ENCODE measurements at regions of chr10 and their contacts with region 1.

Region 1: DNA sequence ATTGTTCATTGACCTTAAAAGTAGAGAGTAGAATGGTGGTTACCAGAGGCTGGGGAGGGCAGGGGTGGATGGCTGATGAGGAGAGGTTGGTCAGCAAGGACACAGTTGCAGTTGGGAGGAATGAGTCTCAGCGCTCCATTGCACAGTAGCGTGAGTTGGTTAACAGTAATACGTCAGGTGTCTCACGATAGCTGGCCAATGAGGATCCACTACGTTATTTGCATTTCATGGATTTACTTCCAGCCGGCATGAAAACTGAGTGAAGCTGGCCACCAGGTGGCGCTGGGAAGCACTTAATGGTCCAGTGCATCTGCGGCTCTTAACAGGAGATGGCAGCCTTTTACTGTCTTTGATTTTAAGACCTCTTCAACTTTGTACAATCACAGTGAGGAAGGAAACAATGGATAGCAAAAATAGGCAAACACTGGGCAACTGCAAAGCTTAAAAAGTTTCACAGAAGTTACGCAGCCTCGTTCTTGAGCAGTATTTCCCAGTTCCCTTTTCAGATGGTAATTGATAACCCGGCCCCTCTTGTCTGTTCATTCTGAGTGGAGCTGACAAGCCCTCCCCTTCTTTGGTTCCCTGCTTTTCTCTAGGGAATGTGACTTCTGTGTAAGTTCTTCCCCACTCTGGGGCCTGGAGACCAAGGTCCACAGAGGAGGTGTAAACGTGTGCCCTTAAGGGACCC is 23.7 kb downstream of the AKR1E2 start:
- DNase-seq: peak; percentile 82 to 92
- ATAC-seq: peak; percentile 88 to 95 (median 95)
- H3K4me3 ChIP-seq: no peak overlapping the region
- H3K4me3 Mint-ChIP-seq: no peak overlapping the region
- H3K27ac ChIP-seq: no peak overlapping the region
- H3K27ac Mint-ChIP-seq: no peak overlapping the region
- H3K4me1 ChIP-seq: peaks cover 4% of the 10 kb centered on the region
- H3K4me1 Mint-ChIP-seq: peaks cover 0 to 13% of the 10 kb centered on the region in 2 donors
- H3K27me3 ChIP-seq: no peaks in the 10 kb centered on the region
- H3K27me3 Mint-ChIP-seq: no peaks in the 10 kb centered on the region
- CTCF ChIP-seq: peak; percentile 100

Region 2: GRCh38 chr10:5094265-5095205 is 244.8 kb after region 1 on chr10 and contains the start of gene AKR1C3:
- intact Hi-C with region 1: loop called (anchors 5 kb)
- DNase-seq: peak in 1 of 2 donors; percentile 59
- ATAC-seq: peak; percentile 73 to 84 (median 81)
- H3K4me3 ChIP-seq: peak within 1 kb of the TSS; percentile 63
- H3K4me3 Mint-ChIP-seq: peak within 1 kb of the TSS; percentile 98
- H3K27ac ChIP-seq: peak within 1 kb of the TSS; percentile 47
- H3K27ac Mint-ChIP-seq: peak within 1 kb of the TSS; percentile 89 to 94
- H3K4me1 ChIP-seq: no peaks in the 10 kb centered on the region
- H3K4me1 Mint-ChIP-seq: peaks cover 45 to 52% of the 10 kb centered on the region in 2 donors
- H3K27me3 ChIP-seq: no peaks in the 10 kb centered on the region
- H3K27me3 Mint-ChIP-seq: peaks cover 1 to 3% of the 10 kb centered on the region in 2 donors
- CTCF ChIP-seq: peak; percentile 69
- total RNA-seq, gene AKR1C3: 77.5 to 140 (median 137) TPM

Region 3: GRCh38 chr10:5283305-5284158 is 433.8 kb after region 1 on chr10:
- intact Hi-C with region 1: loop called (anchors 1 kb)
- DNase-seq: peak; percentile 57 to 78
- ATAC-seq: peak; percentile 84 to 93 (median 84)
- H3K4me3 ChIP-seq: no peak overlapping the region
- H3K4me3 Mint-ChIP-seq: peak overlapping the region; percentile 86
- H3K27ac ChIP-seq: peak overlapping the region; percentile 52
- H3K27ac Mint-ChIP-seq: peak overlapping the region; percentile 85 to 92
- H3K4me1 ChIP-seq: peaks cover 16% of the 10 kb centered on the region
- H3K4me1 Mint-ChIP-seq: peaks cover 42 to 45% of the 10 kb centered on the region in 2 donors
- H3K27me3 ChIP-seq: no peaks in the 10 kb centered on the region
- H3K27me3 Mint-ChIP-seq: no peaks in the 10 kb centered on the region
- CTCF ChIP-seq: peak; percentile 76

Region 4: DNA sequence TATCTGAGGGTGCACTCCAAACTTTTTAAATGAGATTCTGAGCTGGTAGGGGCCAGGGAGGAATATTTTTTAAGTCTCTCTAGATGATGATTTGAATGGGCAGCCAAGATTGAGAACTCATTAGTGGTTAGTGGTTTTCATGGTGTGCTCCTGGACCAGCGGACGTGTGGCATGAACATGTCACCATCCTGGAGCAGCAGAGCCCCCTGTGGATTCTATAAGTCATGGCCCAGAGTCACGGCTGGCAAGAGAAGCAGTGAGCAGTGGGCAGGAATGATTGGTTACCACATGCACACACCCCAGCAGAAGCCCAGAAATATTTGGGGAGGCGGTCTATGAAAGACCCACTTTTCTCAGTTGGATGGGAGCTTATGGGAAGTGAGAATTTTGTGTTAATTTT is 493.9 kb after region 1 on chr10:
- intact Hi-C with region 1: loop called (anchors 1 kb)
- DNase-seq: peak in 1 of 2 donors; percentile 44
- ATAC-seq: peak; percentile 71 to 89 (median 81)
- H3K4me3 ChIP-seq: no peak overlapping the region
- H3K4me3 Mint-ChIP-seq: no peak overlapping the region
- H3K27ac ChIP-seq: no peak overlapping the region
- H3K27ac Mint-ChIP-seq: peak overlapping the region in 1 of 2 donors; percentile 29
- H3K4me1 ChIP-seq: peaks cover 4% of the 10 kb centered on the region
- H3K4me1 Mint-ChIP-seq: peaks cover 25 to 27% of the 10 kb centered on the region in 2 donors
- H3K27me3 ChIP-seq: no peaks in the 10 kb centered on the region
- H3K27me3 Mint-ChIP-seq: no peaks in the 10 kb centered on the region
- CTCF ChIP-seq: peak; percentile 44

Region 5: GRCh38 chr10:5385224-5385623 is 535.5 kb after region 1 on chr10:
- intact Hi-C with region 1: loop called (anchors 1 kb)
- DNase-seq: no peak
- ATAC-seq: no peak
- H3K4me3 ChIP-seq: no peak overlapping the region
- H3K4me3 Mint-ChIP-seq: no peak overlapping the region
- H3K27ac ChIP-seq: no peak overlapping the region
- H3K27ac Mint-ChIP-seq: no peak overlapping the region
- H3K4me1 ChIP-seq: no peaks in the 10 kb centered on the region
- H3K4me1 Mint-ChIP-seq: no peaks in the 10 kb centered on the region
- H3K27me3 ChIP-seq: no peaks in the 10 kb centered on the region
- H3K27me3 Mint-ChIP-seq: no peaks in the 10 kb centered on the region
- CTCF ChIP-seq: no peak

Region 6: GRCh38 chr10:5434017-5434753 is 584.5 kb after region 1 on chr10:
- intact Hi-C with region 1: loop called (anchors 1 kb)
- DNase-seq: peak in 1 of 2 donors; percentile 66
- ATAC-seq: peak; percentile 56 to 72 (median 71)
- H3K4me3 ChIP-seq: no peak overlapping the region
- H3K4me3 Mint-ChIP-seq: no peak overlapping the region
- H3K27ac ChIP-seq: no peak overlapping the region
- H3K27ac Mint-ChIP-seq: peak overlapping the region in 1 of 2 donors; percentile 31
- H3K4me1 ChIP-seq: no peaks in the 10 kb centered on the region
- H3K4me1 Mint-ChIP-seq: peaks cover 9 to 10% of the 10 kb centered on the region in 2 donors
- H3K27me3 ChIP-seq: no peaks in the 10 kb centered on the region
- H3K27me3 Mint-ChIP-seq: no peaks in the 10 kb centered on the region
- CTCF ChIP-seq: peak; percentile 76

Region 7: DNA sequence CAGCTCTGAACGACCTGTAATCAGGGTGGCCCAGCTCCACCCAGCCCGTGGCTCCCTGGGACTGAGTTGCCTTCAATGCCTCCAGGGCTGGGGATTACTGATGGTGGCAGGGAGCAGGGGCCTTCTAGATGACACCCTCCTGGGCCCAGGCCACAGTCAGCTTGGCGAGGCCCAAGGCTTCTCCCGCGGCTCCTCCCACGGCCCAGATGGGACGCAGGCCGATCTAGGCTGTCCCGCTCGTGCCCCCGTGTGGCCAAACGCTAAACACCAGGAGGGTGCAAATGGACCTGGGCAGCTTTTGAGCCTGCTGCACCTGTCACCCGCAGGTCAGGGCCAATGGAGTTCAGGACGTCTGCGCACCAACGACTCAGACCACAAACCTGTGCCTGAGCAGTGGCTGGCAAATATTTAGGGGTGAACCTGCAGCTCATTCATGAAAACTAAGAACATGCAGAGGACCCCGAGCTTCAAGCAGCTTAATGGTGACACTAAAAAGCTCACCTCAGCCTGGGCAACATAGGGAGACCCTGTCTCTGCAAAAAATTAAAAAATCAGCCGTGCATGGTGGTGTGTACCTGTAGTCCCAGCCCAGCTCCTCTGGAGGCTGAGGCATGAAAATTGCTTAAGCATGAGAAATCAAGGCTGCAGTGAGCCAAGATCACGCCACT is 773.5 kb after region 1 on chr10:
- intact Hi-C with region 1: loop called (anchors 1 kb)
- DNase-seq: peak; percentile 59 to 85
- ATAC-seq: peak; percentile 83 to 98 (median 98)
- H3K4me3 ChIP-seq: no peak overlapping the region
- H3K4me3 Mint-ChIP-seq: no peak overlapping the region
- H3K27ac ChIP-seq: no peak overlapping the region
- H3K27ac Mint-ChIP-seq: no peak overlapping the region
- H3K4me1 ChIP-seq: peaks cover 6% of the 10 kb centered on the region
- H3K4me1 Mint-ChIP-seq: no peaks in the 10 kb centered on the region
- H3K27me3 ChIP-seq: no peaks in the 10 kb centered on the region
- H3K27me3 Mint-ChIP-seq: peaks cover 0 to 4% of the 10 kb centered on the region in 2 donors
- CTCF ChIP-seq: peak; percentile 71